Aorta (tissue), 5 donors: ENCODE measurements at regions of chr10 and their contacts with region 1.

Region 1: GRCh38 chr10:92290837-92291615 is at the starts of genes CPEB3 and MARCHF5:
- DNase-seq: peak; percentile 98
- ATAC-seq: peak; percentile 100
- H3K4me3 ChIP-seq: peak within 1 kb of the TSS; percentile 70 to 81
- H3K27ac ChIP-seq: peak within 1 kb of the TSS; percentile 71 to 92
- H3K4me1 ChIP-seq: no peaks in the 10 kb centered on the region
- H3K27me3 ChIP-seq: no peaks in the 10 kb centered on the region
- total RNA-seq, gene CPEB3: 7.4 to 8.0 TPM
- total RNA-seq, gene MARCHF5: 36.5 to 43.0 TPM

Region 2: GRCh38 chr10:92087750-92088395 is 203.2 kb before region 1 on chr10:
- intact Hi-C with region 1: loop called (anchors 2 to 5 kb)
- DNase-seq: peak in 1 of 2 donors; percentile 66
- ATAC-seq: peak; percentile 92
- H3K4me3 ChIP-seq: no peak overlapping the region
- H3K27ac ChIP-seq: no peak overlapping the region
- H3K4me1 ChIP-seq: no peaks in the 10 kb centered on the region
- H3K27me3 ChIP-seq: no peaks in the 10 kb centered on the region

Region 3: GRCh38 chr10:92240289-92241157 is 50.5 kb before region 1 on chr10:
- intact Hi-C with region 1: loop called (anchors 2 to 10 kb)
- DNase-seq: peak in 1 of 2 donors; percentile 61
- ATAC-seq: peak; percentile 77
- H3K4me3 ChIP-seq: peak overlapping the region; percentile 82 to 83
- H3K27ac ChIP-seq: peak overlapping the region in 1 of 2 donors; percentile 56
- H3K4me1 ChIP-seq: peaks cover 2 to 3% of the 10 kb centered on the region in 2 donors
- H3K27me3 ChIP-seq: no peaks in the 10 kb centered on the region

Region 4: GRCh38 chr10:92305133-92306072 is 14.4 kb after region 1 on chr10:
- intact Hi-C with region 1: loop called in 1 of 2 experiments (anchors 2 kb)
- DNase-seq: no peak
- ATAC-seq: no peak
- H3K4me3 ChIP-seq: no peak overlapping the region
- H3K27ac ChIP-seq: no peak overlapping the region
- H3K4me1 ChIP-seq: no peaks in the 10 kb centered on the region
- H3K27me3 ChIP-seq: no peaks in the 10 kb centered on the region

Region 5: GRCh38 chr10:92342796-92343195 is 51.8 kb after region 1 on chr10:
- intact Hi-C with region 1: no loop called
- DNase-seq: no peak
- ATAC-seq: no peak
- H3K4me3 ChIP-seq: no peak overlapping the region
- H3K27ac ChIP-seq: no peak overlapping the region
- H3K4me1 ChIP-seq: no peaks in the 10 kb centered on the region
- H3K27me3 ChIP-seq: no peaks in the 10 kb centered on the region